ENCODE measurements at regions of chr4 and their contacts with region 1.

Region 1: GRCh38 chr4:118034053-118034785 is at the start of gene NDST3:
- DNase-seq: peak; percentile 61
- H3K4me3 ChIP-seq: peak within 1 kb of the TSS; percentile 48 to 59 (median 51)
- H3K27ac ChIP-seq: no peak within 1 kb of the TSS
- H3K4me1 ChIP-seq: peaks cover 8% of the 10 kb centered on the region
- H3K27me3 ChIP-seq: peaks cover 8% of the 10 kb centered on the region
- CTCF ChIP-seq: peak; percentile 55 to 66
- total RNA-seq, gene NDST3: not detected

Region 2: GRCh38 chr4:116180157-116180601 is 1854.0 kb before region 1 on chr4:
- CTCF ChIA-PET with region 1: no interaction called
- dilution Hi-C with region 1: no loop called
- in situ Hi-C with region 1: no loop called
- intact Hi-C with region 1: loop called (anchors 5 kb)
- DNase-seq: peak; percentile 4
- H3K4me3 ChIP-seq: no peak overlapping the region
- H3K27ac ChIP-seq: no peak overlapping the region
- H3K4me1 ChIP-seq: no peaks in the 10 kb centered on the region
- H3K27me3 ChIP-seq: no peaks in the 10 kb centered on the region
- CTCF ChIP-seq: peak; percentile 37 to 55

Region 3: DNA sequence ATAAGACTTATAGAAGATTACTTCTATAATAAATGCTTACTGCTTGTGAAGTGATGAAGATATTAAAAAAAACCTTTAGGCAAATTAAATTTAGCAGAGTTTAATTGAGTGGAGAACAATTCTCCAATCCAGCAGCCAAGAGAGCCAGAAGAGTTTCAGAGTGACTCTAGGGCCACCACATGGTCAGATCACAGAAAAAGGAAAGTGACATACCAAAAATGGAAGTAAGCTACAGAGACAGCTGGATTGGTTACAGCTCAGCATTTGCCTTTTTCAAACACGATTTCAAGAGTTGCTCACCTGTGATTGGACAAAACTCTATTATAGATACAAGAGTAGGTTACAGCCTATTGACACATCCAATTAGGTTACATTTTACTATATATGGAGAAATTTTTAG is 869.9 kb before region 1 on chr4:
- CTCF ChIA-PET with region 1: no interaction called
- dilution Hi-C with region 1: loop called (anchors 10 kb)
- in situ Hi-C with region 1: no loop called
- intact Hi-C with region 1: no loop called
- DNase-seq: no peak
- H3K4me3 ChIP-seq: no peak overlapping the region
- H3K27ac ChIP-seq: no peak overlapping the region
- H3K4me1 ChIP-seq: no peaks in the 10 kb centered on the region
- H3K27me3 ChIP-seq: no peaks in the 10 kb centered on the region
- CTCF ChIP-seq: no peak

Region 4: DNA sequence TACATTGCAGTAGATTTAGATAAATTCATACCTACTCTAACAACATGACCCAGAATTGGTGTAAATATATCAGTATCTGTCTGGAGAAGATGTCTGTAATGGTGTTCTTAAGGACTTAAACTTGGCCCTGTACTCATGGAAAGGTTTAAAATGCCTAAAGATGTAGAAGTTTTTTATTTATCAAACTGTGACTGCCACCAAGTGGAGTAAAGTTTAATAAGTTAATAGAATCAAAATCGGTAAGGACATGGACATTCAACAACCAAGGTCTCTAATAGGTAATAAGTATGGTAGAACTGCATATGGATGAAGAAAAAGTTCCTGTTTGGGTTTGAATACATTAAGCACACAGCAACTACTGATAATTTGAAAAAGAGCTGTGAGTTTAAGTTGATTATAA is 473.9 kb before region 1 on chr4:
- CTCF ChIA-PET with region 1: no interaction called
- dilution Hi-C with region 1: no loop called
- in situ Hi-C with region 1: no loop called
- intact Hi-C with region 1: loop called (anchors 5 kb)
- DNase-seq: peak; percentile 19
- H3K4me3 ChIP-seq: no peak overlapping the region
- H3K27ac ChIP-seq: no peak overlapping the region
- H3K4me1 ChIP-seq: no peaks in the 10 kb centered on the region
- H3K27me3 ChIP-seq: no peaks in the 10 kb centered on the region
- CTCF ChIP-seq: peak; percentile 22 to 26

Region 5: GRCh38 chr4:118193413-118193812 is 159.2 kb after region 1 on chr4:
- CTCF ChIA-PET with region 1: no interaction called
- dilution Hi-C with region 1: no loop called
- in situ Hi-C with region 1: no loop called
- intact Hi-C with region 1: no loop called
- DNase-seq: no peak
- H3K4me3 ChIP-seq: no peak overlapping the region
- H3K27ac ChIP-seq: no peak overlapping the region
- H3K4me1 ChIP-seq: no peaks in the 10 kb centered on the region
- H3K27me3 ChIP-seq: no peaks in the 10 kb centered on the region
- CTCF ChIP-seq: no peak

Region 6: DNA sequence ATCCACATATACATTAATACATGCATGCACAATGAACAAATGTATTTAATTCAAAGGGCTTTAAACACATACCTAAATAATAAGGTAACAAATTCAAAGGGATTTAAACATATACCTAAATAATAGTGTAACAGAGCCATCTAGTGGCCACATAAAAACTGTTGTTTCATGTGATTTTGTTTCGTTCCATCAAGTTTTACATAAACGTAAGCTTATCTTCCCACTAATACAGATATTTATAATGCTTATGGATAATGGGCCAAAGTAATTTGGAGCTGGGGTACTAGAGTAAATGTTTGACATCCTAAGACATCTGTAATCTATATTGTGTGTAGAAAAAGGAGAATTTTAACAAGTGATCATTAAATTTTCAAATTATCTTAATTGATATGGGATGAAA is 236.3 kb after region 1 on chr4:
- CTCF ChIA-PET with region 1: no interaction called
- dilution Hi-C with region 1: no loop called
- in situ Hi-C with region 1: no loop called
- intact Hi-C with region 1: loop called (anchors 5 kb)
- DNase-seq: peak; percentile 30
- H3K4me3 ChIP-seq: no peak overlapping the region
- H3K27ac ChIP-seq: no peak overlapping the region
- H3K4me1 ChIP-seq: no peaks in the 10 kb centered on the region
- H3K27me3 ChIP-seq: no peaks in the 10 kb centered on the region
- CTCF ChIP-seq: peak; percentile 53 to 55

Region 7: DNA sequence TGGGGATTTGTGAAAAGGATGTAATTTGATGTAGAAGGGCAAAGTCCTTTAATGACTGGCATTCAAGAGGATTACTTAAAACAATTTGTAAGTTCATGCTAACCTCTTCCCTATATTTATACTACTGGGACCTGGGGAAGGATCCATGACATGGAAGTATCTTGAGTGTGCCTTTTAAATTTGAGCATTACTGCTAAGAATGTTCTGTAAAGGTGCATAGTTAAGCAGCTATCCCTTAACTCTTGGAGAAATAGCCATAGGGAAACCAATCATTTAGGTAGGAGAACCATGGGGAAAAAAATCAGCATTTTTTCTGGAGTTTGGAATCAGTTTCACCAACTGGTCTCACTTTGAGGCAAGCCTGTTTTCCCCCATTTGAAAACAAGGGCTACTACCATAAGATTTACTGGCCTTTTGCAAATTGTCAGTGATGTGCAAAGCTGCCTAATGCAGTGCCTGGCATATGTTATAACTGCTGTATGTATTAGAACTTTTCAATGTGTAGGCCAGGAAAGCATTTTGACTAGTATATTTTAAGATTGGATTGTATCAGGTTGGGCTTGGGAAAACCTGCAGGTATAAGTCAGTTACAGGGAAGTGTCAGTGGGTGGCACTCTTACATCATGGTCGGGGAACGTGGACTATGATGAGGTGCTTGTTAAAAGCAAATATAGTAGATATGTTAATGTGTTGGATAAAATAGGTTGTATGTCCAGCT is 246.4 kb after region 1 on chr4:
- CTCF ChIA-PET with region 1: no interaction called
- dilution Hi-C with region 1: no loop called
- in situ Hi-C with region 1: no loop called
- intact Hi-C with region 1: no loop called
- DNase-seq: peak; percentile 73
- H3K4me3 ChIP-seq: peak overlapping the region; percentile 81 to 99 (median 85)
- H3K27ac ChIP-seq: peak overlapping the region; percentile 94
- H3K4me1 ChIP-seq: peaks cover 21% of the 10 kb centered on the region
- H3K27me3 ChIP-seq: no peaks in the 10 kb centered on the region
- CTCF ChIP-seq: peak; percentile 60 to 74